B cell (primary cell): ENCODE measurements at regions of chr12 and their contacts with region 1.

Region 1: GRCh38 chr12:94207849-94208621 is 59.7 kb downstream of the PLXNC1 start:
- DNase-seq: peak; percentile 89
- ATAC-seq: peak; percentile 84
- H3K4me3 ChIP-seq: peak overlapping the region; percentile 26 to 65 (median 57)
- H3K4me3 Mint-ChIP-seq: peak overlapping the region; percentile 87
- H3K27ac ChIP-seq: peak overlapping the region; percentile 93 to 96
- H3K27ac Mint-ChIP-seq: peak overlapping the region; percentile 96
- H3K4me1 ChIP-seq: peaks cover 54 to 56% of the 10 kb centered on the region in 2 donors
- H3K4me1 Mint-ChIP-seq: peaks cover 62% of the 10 kb centered on the region
- H3K27me3 ChIP-seq: no peaks in the 10 kb centered on the region
- H3K27me3 Mint-ChIP-seq: no peaks in the 10 kb centered on the region
- CTCF ChIP-seq: no peak

Region 2: GRCh38 chr12:93441617-93442410 is 766.2 kb before region 1 on chr12 and contains the start of gene UBE2N:
- CTCF ChIA-PET with region 1: no interaction called
- POLR2A ChIA-PET with region 1: no interaction called
- intact Hi-C with region 1: loop called (anchors 5 kb)
- DNase-seq: peak; percentile 97
- ATAC-seq: peak; percentile 85
- H3K4me3 ChIP-seq: peak within 1 kb of the TSS; percentile 65 to 92 (median 84)
- H3K4me3 Mint-ChIP-seq: peak within 1 kb of the TSS; percentile 94
- H3K27ac ChIP-seq: peak within 1 kb of the TSS; percentile 88 to 97
- H3K27ac Mint-ChIP-seq: peak within 1 kb of the TSS; percentile 96
- H3K4me1 ChIP-seq: peaks cover 41 to 46% of the 10 kb centered on the region in 2 donors
- H3K4me1 Mint-ChIP-seq: peaks cover 48% of the 10 kb centered on the region
- H3K27me3 ChIP-seq: no peaks in the 10 kb centered on the region
- H3K27me3 Mint-ChIP-seq: no peaks in the 10 kb centered on the region
- CTCF ChIP-seq: no peak
- total RNA-seq, gene UBE2N: 81.7 and 83.8 TPM in 2 replicates

Region 3: DNA sequence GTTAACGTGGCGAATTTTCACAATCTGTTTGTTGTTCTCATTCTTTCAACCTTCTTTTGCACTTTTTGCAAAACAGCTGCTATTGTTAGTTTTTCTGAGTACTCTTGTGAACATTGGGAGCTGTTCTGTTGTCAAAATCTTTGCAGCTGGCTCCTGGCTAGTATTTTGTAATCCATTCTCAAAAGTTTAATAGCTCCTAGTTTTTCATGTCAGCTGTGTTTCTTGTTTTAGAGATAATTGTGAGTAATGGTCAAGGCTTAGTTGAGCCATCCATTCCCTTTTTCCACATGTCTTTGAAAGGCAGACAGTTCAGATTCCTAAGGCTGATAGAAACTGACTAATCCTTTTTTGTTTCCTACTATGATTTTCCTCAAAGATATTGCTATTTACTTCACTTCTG is 569.9 kb before region 1 on chr12:
- CTCF ChIA-PET with region 1: no interaction called
- POLR2A ChIA-PET with region 1: no interaction called
- intact Hi-C with region 1: no loop called
- DNase-seq: no peak
- ATAC-seq: no peak
- H3K4me3 ChIP-seq: no peak overlapping the region
- H3K4me3 Mint-ChIP-seq: no peak overlapping the region
- H3K27ac ChIP-seq: no peak overlapping the region
- H3K27ac Mint-ChIP-seq: no peak overlapping the region
- H3K4me1 ChIP-seq: no peaks in the 10 kb centered on the region
- H3K4me1 Mint-ChIP-seq: no peaks in the 10 kb centered on the region
- H3K27me3 ChIP-seq: peaks cover 0 to 6% (median 0%) of the 10 kb centered on the region in 4 experiments
- H3K27me3 Mint-ChIP-seq: peaks cover 28% of the 10 kb centered on the region
- CTCF ChIP-seq: no peak

Region 4: GRCh38 chr12:94172973-94173372 is 35.1 kb before region 1 on chr12:
- CTCF ChIA-PET with region 1: no interaction called
- POLR2A ChIA-PET with region 1: no interaction called
- intact Hi-C with region 1: loop called (anchors 2 kb)
- DNase-seq: peak; percentile 54
- ATAC-seq: no peak
- H3K4me3 ChIP-seq: peak overlapping the region in 1 of 5 experiments; percentile 57
- H3K4me3 Mint-ChIP-seq: peak overlapping the region; percentile 68
- H3K27ac ChIP-seq: peak overlapping the region; percentile 5 to 7
- H3K27ac Mint-ChIP-seq: peak overlapping the region; percentile 54
- H3K4me1 ChIP-seq: peaks cover 37 to 43% of the 10 kb centered on the region in 2 donors
- H3K4me1 Mint-ChIP-seq: peaks cover 53% of the 10 kb centered on the region
- H3K27me3 ChIP-seq: no peaks in the 10 kb centered on the region
- H3K27me3 Mint-ChIP-seq: no peaks in the 10 kb centered on the region
- CTCF ChIP-seq: no peak

Region 5: GRCh38 chr12:94262228-94263010 is 54.4 kb after region 1 on chr12:
- CTCF ChIA-PET with region 1: no interaction called
- POLR2A ChIA-PET with region 1: interaction called, 6 read pairs
- intact Hi-C with region 1: loop called (anchors 1 kb)
- DNase-seq: peak; percentile 86
- ATAC-seq: peak; percentile 82
- H3K4me3 ChIP-seq: peak overlapping the region; percentile 48 to 77 (median 64)
- H3K4me3 Mint-ChIP-seq: peak overlapping the region; percentile 99
- H3K27ac ChIP-seq: peak overlapping the region; percentile 81 to 90
- H3K27ac Mint-ChIP-seq: peak overlapping the region; percentile 99
- H3K4me1 ChIP-seq: peaks cover 45% of the 10 kb centered on the region in 2 donors
- H3K4me1 Mint-ChIP-seq: peaks cover 58% of the 10 kb centered on the region
- H3K27me3 ChIP-seq: no peaks in the 10 kb centered on the region
- H3K27me3 Mint-ChIP-seq: no peaks in the 10 kb centered on the region
- CTCF ChIP-seq: no peak

Region 6: GRCh38 chr12:94289461-94290312 is 81.7 kb after region 1 on chr12:
- CTCF ChIA-PET with region 1: no interaction called
- POLR2A ChIA-PET with region 1: no interaction called
- intact Hi-C with region 1: loop called (anchors 10 kb)
- DNase-seq: no peak
- ATAC-seq: no peak
- H3K4me3 ChIP-seq: no peak overlapping the region
- H3K4me3 Mint-ChIP-seq: no peak overlapping the region
- H3K27ac ChIP-seq: peak overlapping the region in 1 of 2 donors; percentile 51
- H3K27ac Mint-ChIP-seq: peak overlapping the region; percentile 68
- H3K4me1 ChIP-seq: peaks cover 3 to 11% of the 10 kb centered on the region in 2 donors
- H3K4me1 Mint-ChIP-seq: peaks cover 11% of the 10 kb centered on the region
- H3K27me3 ChIP-seq: no peaks in the 10 kb centered on the region
- H3K27me3 Mint-ChIP-seq: no peaks in the 10 kb centered on the region
- CTCF ChIP-seq: no peak

Region 7: GRCh38 chr12:94488463-94488862 is 280.4 kb after region 1 on chr12:
- CTCF ChIA-PET with region 1: no interaction called
- POLR2A ChIA-PET with region 1: no interaction called
- intact Hi-C with region 1: no loop called
- DNase-seq: peak; percentile 74
- ATAC-seq: peak; percentile 95
- H3K4me3 ChIP-seq: no peak overlapping the region
- H3K4me3 Mint-ChIP-seq: no peak overlapping the region
- H3K27ac ChIP-seq: peak overlapping the region in 1 of 2 donors; percentile 31
- H3K27ac Mint-ChIP-seq: peak overlapping the region; percentile 47
- H3K4me1 ChIP-seq: peaks cover 5 to 13% of the 10 kb centered on the region in 2 donors
- H3K4me1 Mint-ChIP-seq: peaks cover 16% of the 10 kb centered on the region
- H3K27me3 ChIP-seq: no peaks in the 10 kb centered on the region
- H3K27me3 Mint-ChIP-seq: no peaks in the 10 kb centered on the region
- CTCF ChIP-seq: no peak

Region 8: DNA sequence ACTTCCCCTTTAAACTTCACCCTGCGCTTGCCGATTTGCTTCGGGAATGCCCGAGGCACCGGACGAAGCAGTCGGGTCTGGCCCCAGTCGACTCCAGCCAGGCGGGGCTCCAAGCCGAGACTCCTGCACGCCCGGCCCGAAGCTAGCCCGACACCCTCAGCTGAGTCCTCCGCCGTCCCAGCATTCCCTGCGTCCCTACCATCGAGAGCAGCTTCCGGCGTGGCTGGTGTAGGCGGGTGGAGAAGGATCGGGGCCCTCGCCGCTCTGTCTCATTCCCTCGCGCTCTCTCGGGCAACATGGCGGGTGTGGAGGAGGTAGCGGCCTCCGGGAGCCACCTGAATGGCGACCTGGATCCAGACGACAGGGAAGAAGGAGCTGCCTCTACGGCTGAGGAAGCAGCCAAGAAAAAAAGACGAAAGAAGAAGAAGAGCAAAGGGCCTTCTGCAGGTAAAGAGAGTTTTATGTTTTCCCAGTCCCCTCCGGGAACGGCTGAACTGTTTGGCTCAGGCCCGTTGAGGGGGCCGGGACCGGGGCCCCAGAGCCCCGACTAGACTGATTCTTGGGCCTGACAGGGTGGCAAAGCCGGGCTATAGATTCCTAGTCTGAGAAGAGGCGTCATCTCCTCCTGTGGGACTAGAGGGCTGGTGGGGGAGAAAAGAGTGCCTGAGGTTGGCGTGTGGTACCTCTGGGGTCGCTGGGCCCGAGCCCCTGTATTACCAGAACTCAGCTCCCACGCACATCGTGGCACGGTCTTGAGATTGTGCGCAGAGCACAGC is 1266.0 kb after region 1 on chr12 and contains the start of gene METAP2:
- CTCF ChIA-PET with region 1: no interaction called
- POLR2A ChIA-PET with region 1: no interaction called
- intact Hi-C with region 1: no loop called
- DNase-seq: peak; percentile 92
- ATAC-seq: peak; percentile 97
- H3K4me3 ChIP-seq: peak within 1 kb of the TSS; percentile 71 to 98 (median 90)
- H3K4me3 Mint-ChIP-seq: peak within 1 kb of the TSS; percentile 100
- H3K27ac ChIP-seq: peak within 1 kb of the TSS; percentile 73 to 94
- H3K27ac Mint-ChIP-seq: peak within 1 kb of the TSS; percentile 99
- H3K4me1 ChIP-seq: peaks cover 16 to 17% of the 10 kb centered on the region in 2 donors
- H3K4me1 Mint-ChIP-seq: peaks cover 47% of the 10 kb centered on the region
- H3K27me3 ChIP-seq: no peaks in the 10 kb centered on the region
- H3K27me3 Mint-ChIP-seq: peaks cover 6% of the 10 kb centered on the region
- CTCF ChIP-seq: no peak
- total RNA-seq, gene METAP2: 49.9 and 64.5 TPM in 2 replicates